Activated CD4-positive, alpha-beta T cell treated with anti-CD3 and anti-CD28 coated beads, Interleukin-2, amount 10 ng/mL, durations not matched to agents 24 days and 14 days (primary cell): ENCODE measurements at regions of chr11 and their contacts with region 1.

Region 1: DNA sequence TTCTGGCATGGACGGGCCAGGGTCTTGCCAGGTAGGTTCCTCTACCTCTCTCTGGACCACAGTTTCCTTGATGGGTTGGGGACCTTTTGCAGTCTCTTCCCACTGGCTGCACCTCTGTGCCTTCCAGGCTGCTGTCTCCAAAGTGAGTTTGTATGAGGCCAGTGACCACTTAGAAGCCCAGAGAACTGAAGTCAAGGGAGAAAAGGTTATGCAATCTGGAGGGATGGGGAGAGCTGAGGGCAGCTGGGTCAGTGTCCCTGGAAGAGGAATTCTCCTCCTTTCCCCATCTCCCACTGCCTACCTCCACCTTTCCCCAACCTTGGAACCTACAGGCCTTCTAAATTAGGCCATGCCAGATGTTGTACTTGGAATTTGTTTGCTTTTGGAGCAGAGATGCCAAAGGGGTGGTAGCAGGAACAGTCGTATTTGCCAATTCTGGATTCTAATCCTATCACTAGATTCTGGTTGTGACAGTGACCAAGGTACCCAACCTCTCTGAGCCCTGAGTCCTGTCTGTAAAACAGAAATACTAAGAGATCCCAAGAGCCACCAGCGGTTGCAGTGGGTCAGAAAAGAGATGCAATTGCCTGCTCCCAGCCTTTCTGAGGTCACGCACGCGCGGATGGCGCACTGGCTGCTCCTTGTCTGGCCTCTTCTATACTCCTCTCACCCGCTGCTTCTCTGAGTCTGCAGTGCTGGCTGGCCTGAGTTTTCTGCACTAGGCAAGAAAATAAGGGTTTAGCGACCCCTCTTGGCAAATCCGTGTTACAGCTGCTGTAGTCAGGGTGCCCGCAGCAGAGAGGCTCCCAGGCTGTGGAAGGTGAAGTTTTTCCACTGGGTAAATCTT is 10.7 kb upstream of the ACCSL start:
- DNase-seq: peak; percentile 76
- H3K4me3 Mint-ChIP-seq: no peak overlapping the region
- H3K27ac Mint-ChIP-seq: no peak overlapping the region
- H3K4me1 Mint-ChIP-seq: no peaks in the 10 kb centered on the region
- H3K27me3 Mint-ChIP-seq: peaks cover 7% of the 10 kb centered on the region

Region 2: DNA sequence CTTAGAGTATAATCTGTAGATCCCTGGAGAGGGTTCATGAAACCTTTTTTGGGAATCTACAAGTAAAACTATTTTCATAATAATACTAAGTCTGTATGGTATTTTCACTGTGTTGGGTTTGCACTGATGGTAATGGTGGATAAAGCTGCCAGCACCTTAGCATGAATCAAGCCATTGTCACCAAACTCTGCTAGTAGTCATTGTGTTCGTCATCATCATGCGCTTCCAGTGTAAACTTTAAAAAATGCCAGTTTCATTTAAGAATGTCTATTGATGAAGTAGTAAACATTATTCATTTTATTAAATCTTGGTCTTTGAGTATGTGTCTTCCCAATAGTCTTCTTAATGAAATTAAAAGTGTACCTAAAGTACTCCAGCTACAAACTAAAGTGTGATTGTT is 141.4 kb before region 1 on chr11:
- intact Hi-C with region 1: loop called (anchors 1 kb)
- DNase-seq: no peak
- H3K4me3 Mint-ChIP-seq: no peak overlapping the region
- H3K27ac Mint-ChIP-seq: no peak overlapping the region
- H3K4me1 Mint-ChIP-seq: no peaks in the 10 kb centered on the region
- H3K27me3 Mint-ChIP-seq: no peaks in the 10 kb centered on the region

Region 3: GRCh38 chr11:44139565-44140330 is 102.7 kb after region 1 on chr11:
- intact Hi-C with region 1: no loop called
- DNase-seq: no peak
- H3K4me3 Mint-ChIP-seq: no peak overlapping the region
- H3K27ac Mint-ChIP-seq: no peak overlapping the region
- H3K4me1 Mint-ChIP-seq: no peaks in the 10 kb centered on the region
- H3K27me3 Mint-ChIP-seq: no peaks in the 10 kb centered on the region